PC-9 (cell line): ENCODE measurements at regions of chr7 and their contacts with region 1.

Region 1: DNA sequence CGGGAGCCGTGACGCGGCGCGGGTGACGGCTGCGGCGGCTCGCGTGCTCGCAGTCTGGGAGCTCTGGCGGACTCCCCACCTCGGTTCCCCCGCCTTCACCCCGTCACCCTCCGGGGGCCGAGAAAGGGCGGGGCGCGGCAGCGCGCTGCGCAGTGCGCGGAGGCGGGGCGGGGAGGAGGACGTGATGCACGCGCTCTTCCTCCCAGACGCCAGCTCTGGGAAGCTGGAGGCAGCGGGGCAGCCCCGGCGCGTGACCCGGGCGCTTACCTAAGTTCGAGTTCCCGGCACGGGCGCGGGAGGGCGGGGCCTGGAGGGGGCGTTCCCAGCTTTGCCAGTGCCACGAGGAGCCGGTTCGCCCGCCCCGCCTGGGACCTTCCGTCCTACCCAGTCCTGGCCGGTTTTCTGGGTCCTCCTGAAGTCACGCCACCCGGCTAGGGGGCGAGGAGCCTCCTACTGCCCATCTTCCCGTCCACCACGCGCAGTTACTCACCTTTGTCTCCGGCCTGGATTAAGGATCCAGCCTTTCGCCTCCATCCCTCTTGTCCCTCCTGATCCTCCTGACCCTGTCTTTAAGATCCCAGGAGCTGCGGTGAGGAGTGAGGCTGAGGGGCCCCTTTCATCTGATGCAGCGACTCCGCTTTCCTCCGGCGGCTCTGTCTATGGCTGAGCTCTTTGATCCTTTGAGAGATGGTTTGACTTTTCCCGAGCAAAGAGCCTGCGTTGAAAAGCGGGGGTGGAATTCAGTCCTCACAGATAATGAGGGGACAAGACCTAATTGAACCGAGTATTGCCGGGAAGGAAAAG is 470 bp upstream of the NAMPT start:
- DNase-seq: peak; percentile 94 to 100
- H3K4me3 ChIP-seq: peak overlapping the region; percentile 91
- H3K27ac ChIP-seq: peak overlapping the region; percentile 99
- H3K4me1 ChIP-seq: peaks cover 45% of the 10 kb centered on the region
- H3K27me3 ChIP-seq: no peaks in the 10 kb centered on the region
- CTCF ChIP-seq: no peak

Region 2: GRCh38 chr7:106216517-106216922 is 68.7 kb before region 1 on chr7:
- CTCF ChIA-PET with region 1: interaction called, 4 read pairs
- POLR2A ChIA-PET with region 1: interaction called, 18 read pairs
- intact Hi-C with region 1: loop called (anchors 2 kb)
- DNase-seq: peak; percentile 64 to 93
- H3K4me3 ChIP-seq: peak overlapping the region; percentile 43
- H3K27ac ChIP-seq: peak overlapping the region; percentile 88
- H3K4me1 ChIP-seq: peaks cover 36% of the 10 kb centered on the region
- H3K27me3 ChIP-seq: no peaks in the 10 kb centered on the region
- CTCF ChIP-seq: no peak

Region 3: DNA sequence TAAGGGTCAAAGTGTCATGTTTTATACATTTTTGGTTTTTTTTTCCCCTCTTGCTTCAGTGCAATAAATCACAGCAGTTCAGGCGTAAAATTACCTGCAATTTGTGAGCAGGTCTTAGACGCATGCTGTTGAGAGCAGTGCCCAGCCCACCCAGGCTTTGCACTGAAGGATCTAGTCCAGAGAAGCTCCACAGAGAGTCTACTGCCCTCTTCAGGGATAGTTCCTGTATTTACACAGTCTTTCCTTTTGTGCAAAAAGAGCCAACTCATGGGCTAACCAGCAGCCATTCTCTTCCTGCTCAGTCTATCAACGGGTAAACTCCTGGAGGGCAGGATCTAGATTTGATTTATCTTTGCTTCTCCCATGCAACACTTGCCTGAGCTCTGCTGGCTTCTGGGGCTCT is 81.8 kb after region 1 on chr7:
- CTCF ChIA-PET with region 1: interaction called, 6 read pairs
- POLR2A ChIA-PET with region 1: interaction called, 12 read pairs
- intact Hi-C with region 1: loop called (anchors 1 kb)
- DNase-seq: no peak
- H3K4me3 ChIP-seq: no peak overlapping the region
- H3K27ac ChIP-seq: peak overlapping the region; percentile 99
- H3K4me1 ChIP-seq: peaks cover 54% of the 10 kb centered on the region
- H3K27me3 ChIP-seq: no peaks in the 10 kb centered on the region
- CTCF ChIP-seq: 0 out of 2 replicates have a peak, but pooled peaks have one; percentile 21

Region 4: DNA sequence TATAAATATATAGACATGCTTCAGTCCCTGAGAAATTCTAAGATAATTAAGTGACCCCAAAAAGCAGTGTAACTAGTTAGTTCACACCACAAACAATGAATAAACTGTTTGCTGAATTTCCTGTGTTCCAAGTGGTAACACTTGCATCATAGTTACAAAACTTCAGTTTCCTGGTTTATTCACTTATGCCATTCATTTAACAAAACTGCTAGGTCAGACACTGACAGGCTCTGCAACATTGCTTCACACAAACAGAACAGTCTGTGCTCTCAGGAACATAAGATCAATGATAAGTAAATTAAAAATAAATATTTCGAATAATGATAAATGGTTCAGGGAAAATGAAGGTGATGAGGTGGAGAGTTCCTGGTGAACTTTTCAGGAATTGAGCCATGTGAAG is 132.8 kb after region 1 on chr7:
- CTCF ChIA-PET with region 1: no interaction called
- POLR2A ChIA-PET with region 1: interaction called, 8 read pairs
- intact Hi-C with region 1: loop called (anchors 1 kb)
- DNase-seq: peak; percentile 17 to 92
- H3K4me3 ChIP-seq: peak overlapping the region; percentile 24; the same call in 1 of the 2 replicates
- H3K27ac ChIP-seq: peak overlapping the region; percentile 98
- H3K4me1 ChIP-seq: peaks cover 48% of the 10 kb centered on the region
- H3K27me3 ChIP-seq: no peaks in the 10 kb centered on the region
- CTCF ChIP-seq: no peak

Region 5: DNA sequence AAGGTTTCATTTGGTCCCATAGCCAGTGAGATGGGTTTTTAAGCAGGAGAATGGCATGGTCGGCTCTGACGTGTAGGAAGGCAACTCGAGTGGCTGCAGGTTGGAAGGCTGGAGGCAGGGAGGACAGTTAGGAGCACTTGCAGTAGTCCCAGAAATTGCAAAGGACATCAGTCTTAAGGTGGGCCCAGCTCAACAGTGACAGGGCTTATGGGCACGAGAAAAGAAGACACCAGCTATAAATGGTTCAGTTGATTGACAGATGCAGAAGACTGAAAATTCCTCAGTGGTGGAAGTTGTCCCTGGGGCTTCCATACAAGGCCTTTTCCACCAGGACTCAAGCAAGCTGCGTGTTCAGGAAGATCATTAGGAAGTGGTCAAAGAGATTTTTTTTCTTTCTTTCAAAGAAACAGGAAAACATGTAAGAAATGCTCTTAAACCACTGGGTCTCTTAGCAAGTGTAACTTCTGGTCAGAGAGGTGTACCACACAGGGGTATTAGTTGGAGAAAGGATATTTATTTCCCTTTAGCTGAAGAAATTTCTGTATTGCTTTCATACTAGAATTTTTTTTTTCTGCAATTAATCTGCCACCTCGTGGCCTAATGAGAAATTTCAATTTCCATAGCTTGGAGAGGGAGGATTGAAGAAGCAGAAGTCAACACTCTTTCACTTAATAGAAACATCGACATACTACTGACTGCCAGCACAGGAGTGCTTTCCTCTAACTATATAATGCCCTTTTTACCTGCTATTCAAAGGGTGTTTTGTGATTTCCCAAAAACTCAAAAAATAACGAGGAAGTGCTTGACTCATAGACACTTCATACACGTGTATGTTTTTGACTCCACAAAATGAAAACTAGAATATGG is 177.0 kb after region 1 on chr7:
- CTCF ChIA-PET with region 1: interaction called, 6 read pairs
- POLR2A ChIA-PET with region 1: interaction called, 28 read pairs
- intact Hi-C with region 1: loop called (anchors 1 kb)
- DNase-seq: peak; percentile 33 to 50
- H3K4me3 ChIP-seq: no peak overlapping the region
- H3K27ac ChIP-seq: peak overlapping the region; percentile 88
- H3K4me1 ChIP-seq: peaks cover 40% of the 10 kb centered on the region
- H3K27me3 ChIP-seq: no peaks in the 10 kb centered on the region
- CTCF ChIP-seq: peak; percentile 74

Region 6: GRCh38 chr7:107168233-107169119 is 883.2 kb after region 1 on chr7 and contains the start of gene HBP1:
- CTCF ChIA-PET with region 1: no interaction called
- POLR2A ChIA-PET with region 1: interaction called, 3 read pairs
- intact Hi-C with region 1: loop called (anchors 5 kb)
- DNase-seq: peak; percentile 99
- H3K4me3 ChIP-seq: peak within 1 kb of the TSS; percentile 77
- H3K27ac ChIP-seq: peak within 1 kb of the TSS; percentile 86
- H3K4me1 ChIP-seq: peaks cover 26% of the 10 kb centered on the region
- H3K27me3 ChIP-seq: no peaks in the 10 kb centered on the region
- CTCF ChIP-seq: no peak
- total RNA-seq, gene HBP1: 60.0 and 62.1 TPM in 2 replicates